ENCODE measurements at regions of chr12 and their contacts with region 1.

Region 1: GRCh38 chr12:117143008-117143532 is 43.9 kb upstream of the TESC start:
- DNase-seq: no peak
- H3K4me3 ChIP-seq: no peak overlapping the region
- H3K27ac ChIP-seq: no peak overlapping the region
- H3K4me1 ChIP-seq: no peaks in the 10 kb centered on the region
- H3K27me3 ChIP-seq: no peaks in the 10 kb centered on the region
- CTCF ChIP-seq: no peak
- POLR2A ChIP-seq: no peak

Region 2: DNA sequence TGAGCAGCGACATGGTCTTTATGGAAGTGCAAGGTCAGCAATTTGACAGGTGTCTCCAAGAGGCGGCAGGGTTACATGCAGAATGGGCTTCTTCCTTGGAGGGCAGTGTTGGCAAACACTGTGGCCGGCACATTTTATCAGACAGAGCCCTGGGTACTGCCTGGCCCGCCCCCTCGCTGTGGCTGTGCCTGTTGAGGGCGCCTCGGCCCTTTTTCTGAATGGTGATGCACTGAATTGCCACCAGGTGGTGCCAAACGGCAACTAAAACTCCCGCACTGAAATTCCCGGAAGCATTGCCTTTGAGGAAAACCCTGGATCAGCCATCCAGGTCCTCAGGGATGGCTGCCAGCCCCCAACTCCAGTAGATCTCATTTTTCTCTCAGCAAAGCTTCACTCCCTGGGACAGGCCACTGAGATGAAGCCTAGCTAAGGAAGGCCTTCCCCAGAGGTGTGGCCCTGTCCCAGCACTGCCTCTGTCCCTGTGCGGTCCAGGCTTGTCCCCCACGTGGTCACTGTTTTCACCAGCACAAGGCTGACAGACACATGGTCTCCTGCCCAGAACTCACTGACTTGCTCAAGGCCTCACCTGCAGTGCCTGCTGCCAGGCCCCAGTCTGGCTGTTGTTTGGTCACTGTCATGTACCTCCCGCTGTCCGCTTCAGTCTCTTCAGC is 117.5 kb before region 1 on chr12:
- intact Hi-C with region 1: loop called (anchors 10 kb)
- DNase-seq: no peak
- H3K4me3 ChIP-seq: no peak overlapping the region
- H3K27ac ChIP-seq: no peak overlapping the region
- H3K4me1 ChIP-seq: no peaks in the 10 kb centered on the region
- H3K27me3 ChIP-seq: no peaks in the 10 kb centered on the region
- CTCF ChIP-seq: peak; percentile 78 to 87 (median 85)
- POLR2A ChIP-seq: no peak